ENCODE measurements at regions of chr3 and their contacts with region 1.

Region 1: GRCh38 chr3:33030802-33031201 is 66.1 kb downstream of the GLB1 start:
- DNase-seq: peak; percentile 84
- ATAC-seq: peak; percentile 92
- H3K4me3 Mint-ChIP-seq: no peak overlapping the region
- H3K27ac Mint-ChIP-seq: no peak overlapping the region
- H3K4me1 Mint-ChIP-seq: peaks cover 23% of the 10 kb centered on the region
- H3K27me3 Mint-ChIP-seq: no peaks in the 10 kb centered on the region
- CTCF ChIP-seq: peak; percentile 36

Region 2: GRCh38 chr3:33041909-33042308 is 11.1 kb after region 1 on chr3:
- CTCF ChIA-PET with region 1: interaction called, 45 read pairs
- POLR2A ChIA-PET with region 1: interaction called, 4 read pairs
- intact Hi-C with region 1: loop called (anchors 2 kb)
- DNase-seq: no peak
- ATAC-seq: no peak
- H3K4me3 Mint-ChIP-seq: no peak overlapping the region
- H3K27ac Mint-ChIP-seq: no peak overlapping the region
- H3K4me1 Mint-ChIP-seq: peaks cover 37% of the 10 kb centered on the region
- H3K27me3 Mint-ChIP-seq: no peaks in the 10 kb centered on the region
- CTCF ChIP-seq: no peak

Region 3: DNA sequence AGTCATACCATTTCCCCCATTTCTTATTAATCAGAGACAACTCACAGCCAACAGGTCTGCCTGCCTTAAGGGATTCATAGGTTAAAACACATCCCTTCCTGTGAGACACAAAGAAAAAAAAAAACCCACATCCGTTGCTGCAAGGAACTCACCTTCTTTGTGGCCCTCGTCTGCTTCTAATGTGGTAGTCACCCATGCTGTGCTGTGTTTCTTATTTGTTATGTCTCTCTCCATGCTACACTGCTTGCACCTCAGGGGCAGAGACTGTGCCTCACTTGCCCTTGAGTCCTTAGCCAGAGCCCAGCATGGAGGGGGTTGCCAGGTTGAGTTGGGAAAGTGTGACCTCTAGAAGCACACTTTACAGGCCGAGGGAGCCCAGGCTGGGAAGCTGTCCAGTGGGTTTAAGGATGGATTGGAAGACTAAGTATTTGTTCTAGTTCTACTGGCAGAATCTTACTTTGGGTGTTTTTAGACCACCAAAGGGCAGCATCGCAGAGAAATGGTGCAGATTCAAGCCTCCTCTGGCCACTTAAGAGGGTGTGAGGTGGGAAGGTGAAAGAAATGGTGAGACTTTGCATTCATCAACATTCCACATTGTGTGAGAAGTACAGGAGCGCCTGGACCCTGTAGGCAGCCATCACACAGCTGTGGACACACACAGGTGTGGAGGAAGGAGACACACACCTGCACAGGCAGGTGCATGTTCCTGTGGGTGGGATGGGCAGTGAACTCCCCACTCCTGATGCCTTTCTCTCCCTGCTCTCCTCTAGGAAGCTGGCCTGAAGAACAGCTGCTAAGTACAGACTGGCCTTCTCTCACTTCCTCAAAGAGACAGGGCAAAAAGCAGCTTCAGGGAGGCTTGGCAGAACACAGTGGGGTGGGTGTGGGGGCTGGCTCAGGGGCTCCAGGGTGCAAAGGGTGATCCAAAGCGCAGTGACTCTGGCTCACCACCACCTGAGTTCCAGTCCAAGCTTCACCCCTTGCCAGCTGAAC is 17.3 kb after region 1 on chr3:
- CTCF ChIA-PET with region 1: interaction called, 45 read pairs
- POLR2A ChIA-PET with region 1: interaction called, 4 read pairs
- intact Hi-C with region 1: loop called (anchors 2 kb)
- DNase-seq: peak; percentile 74
- ATAC-seq: peak; percentile 86
- H3K4me3 Mint-ChIP-seq: peak overlapping the region; percentile 21
- H3K27ac Mint-ChIP-seq: peak overlapping the region; percentile 93
- H3K4me1 Mint-ChIP-seq: peaks cover 66% of the 10 kb centered on the region
- H3K27me3 Mint-ChIP-seq: no peaks in the 10 kb centered on the region
- CTCF ChIP-seq: no peak

Region 4: DNA sequence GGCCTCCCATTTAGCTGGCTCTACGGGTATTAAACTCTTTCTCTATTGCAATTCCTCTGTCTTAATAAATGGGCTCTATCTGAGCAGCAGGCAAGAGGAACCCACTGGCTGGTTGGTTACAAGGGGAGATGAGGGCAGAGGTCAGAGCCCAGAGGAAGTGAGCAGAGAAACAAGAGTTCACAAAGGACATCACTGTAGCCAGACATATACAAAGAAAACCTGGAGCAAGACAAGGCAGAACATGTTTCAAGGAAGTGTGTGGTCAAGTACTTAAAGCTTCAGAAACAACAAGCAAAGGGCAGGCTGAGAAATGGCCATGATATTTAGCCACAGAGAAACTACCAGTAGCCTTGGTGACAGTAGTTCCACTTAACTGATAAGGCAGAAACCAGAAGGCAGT is 163.5 kb after region 1 on chr3:
- CTCF ChIA-PET with region 1: no interaction called
- POLR2A ChIA-PET with region 1: no interaction called
- intact Hi-C with region 1: no loop called
- DNase-seq: no peak
- ATAC-seq: no peak
- H3K4me3 Mint-ChIP-seq: no peak overlapping the region
- H3K27ac Mint-ChIP-seq: no peak overlapping the region
- H3K4me1 Mint-ChIP-seq: no peaks in the 10 kb centered on the region
- H3K27me3 Mint-ChIP-seq: peaks cover 8% of the 10 kb centered on the region
- CTCF ChIP-seq: no peak

Measured in activated CD8-positive, alpha-beta T cell treated with anti-CD3 and anti-CD28 coated beads for 36 hours (primary cell).